ENCODE measurements at regions of chr14 and their contacts with region 1.

Region 1: DNA sequence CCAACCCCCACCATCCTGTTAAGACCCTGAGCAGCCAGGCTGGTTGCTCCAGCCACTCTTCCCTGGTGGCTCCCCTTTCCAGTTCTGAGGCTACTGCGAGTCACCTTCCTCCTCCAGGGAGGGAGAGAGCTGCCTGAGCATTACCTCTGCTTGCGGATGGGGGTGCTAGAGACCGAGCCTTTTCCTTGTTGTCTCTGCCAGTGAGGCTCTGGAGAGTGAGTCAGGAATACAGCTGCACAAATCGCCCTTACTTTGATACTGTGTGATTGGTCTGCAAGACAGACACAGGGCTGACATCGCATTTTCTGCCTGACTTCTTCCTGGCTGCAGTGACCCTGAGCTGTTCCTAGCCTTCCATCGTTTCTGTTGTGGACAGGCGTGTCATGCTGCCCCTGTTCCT is 94.3 kb downstream of the SLC25A47 start:
- DNase-seq: peak; percentile 85
- H3K4me3 ChIP-seq: no peak overlapping the region; a peak in 1 of 4 replicates
- H3K27ac ChIP-seq: peak overlapping the region; percentile 52 to 84
- H3K4me1 ChIP-seq: peaks cover 9 to 53% of the 10 kb centered on the region in 2 experiments
- H3K27me3 ChIP-seq: no peaks in the 10 kb centered on the region
- CTCF ChIP-seq: peak; percentile 88
- EP300 ChIP-seq: peak in 1 of 2 experiments; percentile 49; a peak in 1 of 4 replicates
- RAD21 ChIP-seq: peak; percentile 98

Region 2: DNA sequence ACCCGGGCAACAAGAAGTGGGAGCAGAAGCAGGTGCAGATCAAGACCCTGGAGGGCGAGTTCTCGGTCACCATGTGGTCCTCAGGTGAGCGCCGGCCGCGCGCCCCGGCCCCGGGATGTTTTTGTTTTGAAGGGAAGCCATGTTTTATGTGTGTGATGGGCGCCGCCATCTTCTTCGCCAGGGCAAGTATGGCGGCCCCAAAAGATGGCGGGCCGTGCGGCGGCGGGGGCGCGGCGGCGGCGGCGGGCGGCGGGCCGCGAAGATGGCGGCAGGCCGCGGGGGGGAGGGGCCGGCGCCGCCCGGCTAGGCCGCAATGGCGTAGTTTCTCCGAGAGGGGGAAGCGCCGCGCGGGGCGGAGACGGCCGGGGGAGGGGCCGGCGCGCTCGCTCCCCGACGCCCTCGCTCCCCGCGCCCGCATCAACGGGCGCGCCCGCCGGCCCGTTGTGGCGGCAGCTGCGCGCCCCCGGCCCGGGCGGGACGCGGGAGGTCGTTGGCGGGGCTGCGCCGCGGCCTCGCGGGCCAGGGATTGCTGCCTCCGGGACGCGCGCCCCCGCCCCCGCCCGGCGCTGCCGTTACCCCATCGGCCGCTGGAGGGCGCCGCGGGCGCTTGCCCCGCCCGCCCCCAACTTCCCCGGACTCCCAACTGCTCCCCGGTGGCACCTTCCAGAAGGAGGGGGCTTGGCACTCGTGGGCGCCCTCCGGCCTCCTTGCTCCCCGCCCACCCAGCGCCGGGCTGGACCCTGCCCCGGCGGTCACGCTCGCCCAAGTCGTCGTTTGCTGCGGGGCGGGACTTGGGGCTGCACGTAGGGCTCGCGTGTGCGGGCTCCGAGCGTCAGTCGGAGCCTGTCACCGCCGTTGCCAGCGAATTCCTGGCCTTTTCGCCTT is 177.4 kb before region 1 on chr14:
- CTCF ChIA-PET with region 1: no interaction called
- POLR2A ChIA-PET with region 1: no interaction called
- DNase-seq: peak; percentile 92
- H3K4me3 ChIP-seq: peak overlapping the region; percentile 92 to 94
- H3K27ac ChIP-seq: peak overlapping the region; percentile 83 to 87
- H3K4me1 ChIP-seq: peaks cover 7 to 14% of the 10 kb centered on the region in 2 experiments
- H3K27me3 ChIP-seq: no peaks in the 10 kb centered on the region
- CTCF ChIP-seq: peak; percentile 63
- EP300 ChIP-seq: no peak
- RAD21 ChIP-seq: 0 out of 2 replicates have a peak, but pooled peaks have one; percentile 1

Region 3: GRCh38 chr14:100466111-100466856 is 48.8 kb after region 1 on chr14:
- CTCF ChIA-PET with region 1: no interaction called
- POLR2A ChIA-PET with region 1: no interaction called
- DNase-seq: no peak
- H3K4me3 ChIP-seq: no peak overlapping the region
- H3K27ac ChIP-seq: no peak overlapping the region; a peak in 1 of 4 replicates
- H3K4me1 ChIP-seq: peaks cover 0 to 32% of the 10 kb centered on the region in 2 experiments; a peak in 2 of 4 replicates
- H3K27me3 ChIP-seq: no peaks in the 10 kb centered on the region
- CTCF ChIP-seq: no peak
- EP300 ChIP-seq: no peak
- RAD21 ChIP-seq: no peak

Region 4: GRCh38 chr14:100533656-100534485 is 116.4 kb after region 1 on chr14:
- CTCF ChIA-PET with region 1: interaction called, 15 read pairs
- POLR2A ChIA-PET with region 1: interaction called, 4 read pairs
- DNase-seq: peak; percentile 59
- H3K4me3 ChIP-seq: no peak overlapping the region
- H3K27ac ChIP-seq: peak overlapping the region in 1 of 2 experiments; percentile 73; a peak in 2 of 4 replicates
- H3K4me1 ChIP-seq: peaks cover 0 to 57% of the 10 kb centered on the region in 2 experiments; a peak in 1 of 4 replicates
- H3K27me3 ChIP-seq: no peaks in the 10 kb centered on the region
- CTCF ChIP-seq: no peak
- EP300 ChIP-seq: no peak
- RAD21 ChIP-seq: 0 out of 2 replicates have a peak, but pooled peaks have one; percentile 0

Region 5: DNA sequence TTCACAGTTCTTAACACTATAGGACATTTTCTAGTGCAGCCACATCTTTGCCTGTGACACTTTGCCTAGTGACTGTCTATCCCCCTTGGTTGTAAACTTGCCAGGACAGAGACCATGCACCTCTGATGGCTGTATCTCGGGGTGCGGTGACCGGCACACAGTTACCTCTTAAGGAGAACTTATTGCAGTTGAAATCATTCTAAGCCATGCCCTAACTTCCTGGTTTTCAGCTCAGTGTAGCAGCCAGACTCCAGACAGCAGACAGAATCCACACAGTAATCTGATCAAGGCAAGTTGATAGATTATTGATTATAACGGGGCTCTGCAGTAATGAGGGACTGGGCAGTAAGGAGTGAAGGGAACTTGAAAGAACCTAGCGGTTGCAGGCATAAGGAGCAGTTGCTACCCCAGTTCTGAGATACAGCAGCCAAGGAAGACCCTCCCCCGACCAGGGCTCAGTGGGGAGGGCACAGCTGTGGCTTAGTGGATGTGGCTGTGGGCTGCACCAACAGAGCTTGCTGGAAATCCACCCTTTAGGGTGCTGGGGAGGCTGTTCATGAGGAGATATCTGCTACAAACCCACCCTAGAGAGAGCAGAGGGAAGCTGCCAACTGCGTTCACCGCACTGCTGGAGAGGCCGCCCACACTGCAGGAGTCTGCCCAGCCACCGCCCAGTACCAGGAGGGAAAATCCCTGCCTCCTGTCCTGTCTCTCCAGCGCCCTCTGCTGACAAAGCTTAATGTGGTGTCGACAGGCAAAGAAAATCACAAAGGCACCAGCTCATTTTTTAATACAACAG is 227.9 kb after region 1 on chr14:
- CTCF ChIA-PET with region 1: interaction called, 15 read pairs
- POLR2A ChIA-PET with region 1: no interaction called
- DNase-seq: peak; percentile 84
- H3K4me3 ChIP-seq: peak overlapping the region in 1 of 2 experiments; percentile 39; a peak in 1 of 4 replicates
- H3K27ac ChIP-seq: peak overlapping the region in 1 of 2 experiments; percentile 76; a peak in 2 of 4 replicates
- H3K4me1 ChIP-seq: peaks cover 5 to 34% of the 10 kb centered on the region in 2 experiments; a peak in 2 of 4 replicates
- H3K27me3 ChIP-seq: no peaks in the 10 kb centered on the region
- CTCF ChIP-seq: peak; percentile 53
- EP300 ChIP-seq: no peak
- RAD21 ChIP-seq: peak; percentile 86

Region 6: DNA sequence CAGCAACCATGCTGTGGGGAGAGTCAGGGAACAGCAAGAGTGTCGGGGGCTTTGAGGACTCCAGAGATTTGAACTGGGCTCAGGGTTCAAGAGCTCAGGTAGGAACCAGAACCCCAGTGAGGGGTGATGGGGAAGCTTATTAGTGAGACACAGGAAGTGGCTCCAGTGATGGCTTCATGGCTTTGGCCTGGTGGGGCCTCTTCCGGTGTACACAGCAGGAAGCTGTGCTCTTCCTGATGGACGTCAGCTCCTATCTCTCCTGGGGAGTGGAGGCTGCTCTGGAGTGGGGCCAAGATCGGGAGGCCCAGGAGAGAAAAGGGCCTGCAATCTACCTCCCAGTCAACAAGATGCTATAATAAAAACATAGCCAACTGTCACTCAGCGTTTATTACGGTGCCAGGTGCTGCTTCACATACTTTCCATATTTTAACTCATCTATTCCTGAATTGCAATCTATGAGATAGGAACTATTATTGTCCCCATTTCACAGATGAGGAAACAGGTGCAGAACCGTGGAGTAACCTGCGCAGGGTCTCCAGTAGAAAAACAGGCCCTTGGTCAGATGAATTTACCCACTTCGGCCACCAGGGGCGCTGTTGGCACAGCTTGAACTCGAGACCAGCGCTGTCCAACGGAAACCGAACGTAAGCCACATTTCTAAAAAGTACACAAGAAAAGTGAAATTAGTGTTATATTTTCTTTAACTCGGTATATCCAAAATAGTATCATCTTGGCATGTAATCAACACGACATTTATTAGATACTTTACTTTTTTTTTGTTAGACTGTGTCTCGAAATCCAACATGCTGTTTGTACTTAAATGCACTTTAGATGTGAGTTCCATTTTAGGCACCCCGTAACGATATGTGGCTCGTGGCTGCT is 245.7 kb after region 1 on chr14:
- CTCF ChIA-PET with region 1: interaction called, 11 read pairs
- POLR2A ChIA-PET with region 1: no interaction called
- DNase-seq: peak; percentile 85
- H3K4me3 ChIP-seq: no peak overlapping the region; a peak in 1 of 4 replicates
- H3K27ac ChIP-seq: peak overlapping the region in 1 of 2 experiments; percentile 77; a peak in 2 of 4 replicates
- H3K4me1 ChIP-seq: peaks cover 0 to 48% of the 10 kb centered on the region in 2 experiments; a peak in 1 of 4 replicates
- H3K27me3 ChIP-seq: no peaks in the 10 kb centered on the region
- CTCF ChIP-seq: peak; percentile 96
- EP300 ChIP-seq: no peak
- RAD21 ChIP-seq: peak; percentile 89